ENCODE measurements at regions of chr3 and their contacts with region 1.

Region 1: DNA sequence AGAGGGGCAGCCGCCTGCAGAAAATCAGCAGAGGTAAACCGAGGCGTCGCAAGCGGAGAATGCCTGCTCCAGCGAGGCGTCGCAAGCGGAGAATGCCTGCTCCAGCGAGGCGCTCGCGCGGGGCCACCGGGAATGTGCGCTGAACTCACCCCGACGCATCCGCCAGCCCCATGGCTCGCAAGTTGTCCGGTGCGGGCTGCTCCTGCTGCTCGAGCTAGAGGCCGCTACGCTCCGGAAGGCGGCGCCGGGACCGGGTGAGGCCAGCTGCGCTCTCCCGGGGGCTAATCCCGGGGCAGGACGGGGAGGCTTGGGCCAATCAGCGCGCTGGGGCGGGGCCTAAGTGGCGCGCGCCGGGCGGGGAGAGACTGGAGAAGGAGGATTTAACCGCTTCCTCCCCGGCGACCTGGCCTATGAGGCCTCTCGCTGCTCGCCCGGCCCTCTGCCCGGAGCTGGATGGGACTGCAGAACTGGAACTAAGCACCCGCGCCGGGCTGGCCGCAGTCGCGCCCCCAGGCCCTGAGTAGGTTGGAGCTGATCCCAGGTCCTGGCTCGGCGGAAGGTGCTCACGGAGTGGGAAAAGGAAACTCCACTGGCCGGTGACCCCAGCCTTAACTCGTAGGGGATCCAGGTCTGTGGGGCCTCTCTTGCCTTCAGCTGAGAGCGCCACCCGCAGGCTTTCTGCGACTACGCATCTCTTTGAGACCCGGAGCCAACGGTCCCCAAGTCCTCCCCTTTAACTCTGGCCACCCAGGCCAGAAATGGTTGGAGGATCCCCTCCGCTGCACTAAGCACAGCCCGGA is at the start of gene SLC26A6:
- DNase-seq: peak; percentile 96
- H3K4me3 Mint-ChIP-seq: peak within 1 kb of the TSS; percentile 89
- H3K27ac Mint-ChIP-seq: peak within 1 kb of the TSS; percentile 87
- H3K4me1 Mint-ChIP-seq: peaks cover 20% of the 10 kb centered on the region
- H3K27me3 Mint-ChIP-seq: no peaks in the 10 kb centered on the region
- total RNA-seq, gene SLC26A6: 46.3 and 52.8 TPM in 2 replicates

Region 2: DNA sequence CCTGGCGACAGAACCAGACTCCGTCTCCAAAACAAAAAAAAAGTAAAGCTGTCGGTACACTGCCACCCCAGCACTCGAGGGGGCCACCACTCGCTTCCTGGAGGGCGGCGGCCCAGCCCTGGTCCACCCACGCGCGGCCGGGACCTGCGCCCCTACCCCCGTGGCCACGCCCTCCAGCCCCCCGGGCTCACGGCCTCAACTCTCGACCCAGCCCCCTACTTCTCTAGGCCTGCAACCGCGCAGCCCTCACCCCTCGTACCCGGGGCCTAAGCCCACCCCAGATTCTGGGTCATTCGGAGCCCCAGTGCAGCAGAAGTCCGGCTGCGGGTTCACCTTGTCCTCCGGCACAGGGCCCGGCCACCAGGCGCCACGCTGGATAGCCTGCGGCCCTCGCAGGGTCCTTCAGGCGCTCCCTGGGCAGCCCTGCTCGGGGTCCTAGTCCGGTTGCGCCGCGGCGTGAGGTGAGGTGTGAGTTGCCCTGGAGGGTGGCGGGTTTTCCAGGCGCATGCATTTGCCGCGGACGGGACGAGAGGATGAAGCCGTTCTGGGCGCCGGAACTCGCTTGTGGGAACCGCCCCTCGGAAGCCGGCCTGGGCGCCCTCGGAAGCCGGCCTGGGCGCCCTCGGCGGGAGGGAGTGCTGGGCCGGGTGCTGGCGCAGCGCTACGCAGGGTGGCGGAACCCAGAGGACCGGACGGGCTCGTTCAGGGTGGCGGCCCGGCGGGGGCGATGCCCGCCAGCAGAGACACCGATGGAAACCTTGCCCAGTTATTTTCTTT is 334.2 kb before region 1 on chr3:
- intact Hi-C with region 1: loop called (anchors 1 kb)
- DNase-seq: peak; percentile 87
- H3K4me3 Mint-ChIP-seq: peak within 1 kb of the TSS; percentile 95
- H3K27ac Mint-ChIP-seq: peak within 1 kb of the TSS; percentile 98
- H3K4me1 Mint-ChIP-seq: peaks cover 52% of the 10 kb centered on the region
- H3K27me3 Mint-ChIP-seq: peaks cover 11% of the 10 kb centered on the region

Region 3: GRCh38 chr3:48446425-48447193 is 188.8 kb before region 1 on chr3 and contains the start of gene ATRIP:
- intact Hi-C with region 1: loop called (anchors 2 kb)
- DNase-seq: peak; percentile 88
- H3K4me3 Mint-ChIP-seq: peak within 1 kb of the TSS; percentile 90
- H3K27ac Mint-ChIP-seq: peak within 1 kb of the TSS; percentile 62
- H3K4me1 Mint-ChIP-seq: peaks cover 39% of the 10 kb centered on the region
- H3K27me3 Mint-ChIP-seq: no peaks in the 10 kb centered on the region
- total RNA-seq, gene ATRIP: 16.5 and 20.5 TPM in 2 replicates

Region 4: GRCh38 chr3:48472915-48473616 is 162.4 kb before region 1 on chr3:
- intact Hi-C with region 1: loop called (anchors 1 kb)
- DNase-seq: peak; percentile 94
- H3K4me3 Mint-ChIP-seq: peak overlapping the region; percentile 82
- H3K27ac Mint-ChIP-seq: peak overlapping the region; percentile 95
- H3K4me1 Mint-ChIP-seq: peaks cover 64% of the 10 kb centered on the region
- H3K27me3 Mint-ChIP-seq: no peaks in the 10 kb centered on the region

Region 5: GRCh38 chr3:48598323-48599076 is 36.9 kb before region 1 on chr3:
- intact Hi-C with region 1: no loop called
- DNase-seq: no peak
- H3K4me3 Mint-ChIP-seq: no peak overlapping the region
- H3K27ac Mint-ChIP-seq: no peak overlapping the region
- H3K4me1 Mint-ChIP-seq: no peaks in the 10 kb centered on the region
- H3K27me3 Mint-ChIP-seq: peaks cover 11% of the 10 kb centered on the region

Region 6: DNA sequence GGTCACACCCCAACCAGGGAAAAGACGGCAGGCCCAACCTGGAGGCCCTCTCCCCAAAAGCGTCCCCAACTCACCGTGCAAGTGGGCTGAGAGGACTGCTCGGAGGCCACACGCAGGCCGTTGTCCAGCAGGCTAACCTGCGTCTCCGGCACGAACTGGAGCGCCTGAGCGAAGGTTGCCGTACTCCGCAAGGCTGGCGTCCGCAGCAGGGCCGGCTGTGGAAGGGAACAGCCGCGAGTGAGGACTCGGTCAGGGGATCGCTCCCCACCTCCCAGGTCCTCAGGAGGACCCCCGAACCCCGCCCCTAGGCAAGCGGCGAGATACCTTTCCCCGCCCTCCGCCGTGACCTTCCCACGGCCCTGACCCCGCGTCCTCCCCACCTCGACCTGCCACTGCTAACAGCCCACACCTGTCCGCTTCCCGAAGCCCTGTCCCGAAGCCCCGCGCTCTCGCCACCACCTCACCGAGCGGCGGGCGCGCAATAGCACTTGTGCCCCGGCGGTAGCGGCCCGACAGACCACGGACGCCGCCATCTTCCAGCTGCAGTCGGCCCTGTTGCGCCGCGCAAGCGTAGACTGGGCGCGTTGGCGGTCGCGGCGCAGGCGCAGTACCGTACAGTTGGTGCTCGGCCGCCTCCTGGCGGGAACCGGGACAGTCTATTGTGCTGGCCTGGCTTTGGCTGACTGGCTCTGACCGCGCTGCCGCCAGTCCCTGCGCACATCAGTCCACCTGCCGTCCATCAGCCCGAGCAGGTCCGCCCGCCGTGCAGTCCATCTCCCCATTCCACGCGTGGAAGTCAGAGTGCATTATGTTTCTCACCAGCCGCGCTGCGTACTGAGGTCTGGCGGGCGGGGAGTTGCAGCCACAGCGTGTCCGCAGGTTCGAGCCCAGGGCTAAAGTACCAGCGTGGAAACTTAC is 26.1 kb before region 1 on chr3 and contains the start of gene UQCRC1:
- intact Hi-C with region 1: loop called (anchors 1 kb)
- DNase-seq: peak; percentile 92
- H3K4me3 Mint-ChIP-seq: peak within 1 kb of the TSS; percentile 100
- H3K27ac Mint-ChIP-seq: peak within 1 kb of the TSS; percentile 97
- H3K4me1 Mint-ChIP-seq: peaks cover 22% of the 10 kb centered on the region
- H3K27me3 Mint-ChIP-seq: peaks cover 2% of the 10 kb centered on the region
- total RNA-seq, gene UQCRC1: 191 and 193 TPM in 2 replicates

Region 7: GRCh38 chr3:48656061-48656840 is 20.8 kb after region 1 on chr3:
- intact Hi-C with region 1: loop called (anchors 1 kb)
- DNase-seq: peak; percentile 80
- H3K4me3 Mint-ChIP-seq: peak overlapping the region; percentile 79
- H3K27ac Mint-ChIP-seq: peak overlapping the region; percentile 89
- H3K4me1 Mint-ChIP-seq: peaks cover 7% of the 10 kb centered on the region
- H3K27me3 Mint-ChIP-seq: peaks cover 4% of the 10 kb centered on the region

Region 8: GRCh38 chr3:48663415-48664312 is 28.2 kb after region 1 on chr3:
- intact Hi-C with region 1: loop called (anchors 1 kb)
- DNase-seq: peak; percentile 92
- H3K4me3 Mint-ChIP-seq: peak overlapping the region; percentile 95
- H3K27ac Mint-ChIP-seq: peak overlapping the region; percentile 96
- H3K4me1 Mint-ChIP-seq: peaks cover 15% of the 10 kb centered on the region
- H3K27me3 Mint-ChIP-seq: peaks cover 15% of the 10 kb centered on the region

Region 9: GRCh38 chr3:48847504-48848423 is 212.3 kb after region 1 on chr3 and contains the start of gene PRKAR2A:
- intact Hi-C with region 1: no loop called
- DNase-seq: peak; percentile 79
- H3K4me3 Mint-ChIP-seq: peak within 1 kb of the TSS; percentile 87
- H3K27ac Mint-ChIP-seq: peak within 1 kb of the TSS; percentile 71
- H3K4me1 Mint-ChIP-seq: peaks cover 22% of the 10 kb centered on the region
- H3K27me3 Mint-ChIP-seq: no peaks in the 10 kb centered on the region
- total RNA-seq, gene PRKAR2A: 34.7 and 38.8 TPM in 2 replicates